Activated naive CD4-positive, alpha-beta T cell treated with anti-CD3 and anti-CD28 coated beads, Interleukin-2, amount 10 ng/mL, durations not matched to agents 7 days and 5 days (primary cell): ENCODE measurements at regions of chr7 and their contacts with region 1.

Region 1: GRCh38 chr7:1193593-1194424 is 33.8 kb upstream of the ZFAND2A start:
- DNase-seq: peak; percentile 68
- H3K4me3 Mint-ChIP-seq: no peak overlapping the region
- H3K27ac Mint-ChIP-seq: no peak overlapping the region
- H3K4me1 Mint-ChIP-seq: peaks cover 29% of the 10 kb centered on the region
- H3K27me3 Mint-ChIP-seq: peaks cover 29% of the 10 kb centered on the region

Region 2: GRCh38 chr7:1169409-1170368 is 24.1 kb before region 1 on chr7:
- CTCF ChIA-PET with region 1: interaction called, 33 read pairs
- DNase-seq: peak; percentile 97
- H3K4me3 Mint-ChIP-seq: peak overlapping the region; percentile 82
- H3K27ac Mint-ChIP-seq: peak overlapping the region; percentile 94
- H3K4me1 Mint-ChIP-seq: peaks cover 21% of the 10 kb centered on the region
- H3K27me3 Mint-ChIP-seq: peaks cover under 1% of the 10 kb centered on the region

Region 3: DNA sequence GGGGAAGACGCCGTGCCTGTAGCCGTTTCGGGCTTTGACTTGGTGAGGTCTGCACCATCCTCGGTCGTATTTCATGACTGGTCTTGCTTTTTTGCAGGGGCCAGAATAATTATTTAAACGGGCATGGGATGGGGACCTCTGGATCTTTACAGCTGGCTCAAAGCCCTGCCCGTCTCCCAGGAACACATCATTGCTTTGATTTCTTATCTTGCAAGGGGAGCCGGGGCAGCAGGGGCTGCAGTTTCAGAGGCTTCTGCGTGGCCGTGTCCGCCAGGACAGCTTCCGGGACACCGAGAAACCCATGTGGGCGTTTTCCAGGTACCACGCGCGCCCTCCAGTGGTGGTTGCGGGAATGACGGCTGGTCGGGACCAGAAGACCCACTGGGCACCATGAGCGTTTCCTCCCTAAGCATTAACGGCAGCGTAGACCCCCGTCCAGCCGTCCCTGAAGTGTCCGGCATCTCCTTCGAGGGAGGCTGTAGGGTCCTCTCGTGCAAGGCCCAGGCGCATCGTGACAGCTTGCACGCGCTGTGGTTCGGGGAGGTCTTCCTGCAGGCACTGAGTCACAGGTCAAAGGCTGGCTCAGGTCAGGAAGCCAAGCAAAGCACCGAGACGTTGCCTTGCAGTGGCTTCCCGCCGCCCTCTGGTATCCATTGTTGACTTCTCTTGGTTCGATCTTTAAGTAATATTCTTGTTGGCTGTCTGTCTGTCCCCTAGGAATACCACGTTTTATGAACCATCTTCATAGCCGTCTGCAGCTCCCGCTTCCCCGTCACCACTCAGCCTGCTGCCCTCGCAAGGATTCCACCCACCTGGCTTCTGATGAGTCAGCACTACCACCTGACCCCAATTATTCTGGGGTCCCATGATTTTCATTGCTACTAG is 17.6 kb before region 1 on chr7:
- CTCF ChIA-PET with region 1: interaction called, 40 read pairs
- DNase-seq: peak; percentile 88
- H3K4me3 Mint-ChIP-seq: peak overlapping the region; percentile 31
- H3K27ac Mint-ChIP-seq: peak overlapping the region; percentile 80
- H3K4me1 Mint-ChIP-seq: peaks cover 17% of the 10 kb centered on the region
- H3K27me3 Mint-ChIP-seq: peaks cover 26% of the 10 kb centered on the region

Region 4: GRCh38 chr7:1181640-1182039 is 12.2 kb before region 1 on chr7:
- CTCF ChIA-PET with region 1: interaction called, 40 read pairs
- DNase-seq: no peak
- H3K4me3 Mint-ChIP-seq: no peak overlapping the region
- H3K27ac Mint-ChIP-seq: no peak overlapping the region
- H3K4me1 Mint-ChIP-seq: peaks cover 10% of the 10 kb centered on the region
- H3K27me3 Mint-ChIP-seq: peaks cover 46% of the 10 kb centered on the region

Region 5: DNA sequence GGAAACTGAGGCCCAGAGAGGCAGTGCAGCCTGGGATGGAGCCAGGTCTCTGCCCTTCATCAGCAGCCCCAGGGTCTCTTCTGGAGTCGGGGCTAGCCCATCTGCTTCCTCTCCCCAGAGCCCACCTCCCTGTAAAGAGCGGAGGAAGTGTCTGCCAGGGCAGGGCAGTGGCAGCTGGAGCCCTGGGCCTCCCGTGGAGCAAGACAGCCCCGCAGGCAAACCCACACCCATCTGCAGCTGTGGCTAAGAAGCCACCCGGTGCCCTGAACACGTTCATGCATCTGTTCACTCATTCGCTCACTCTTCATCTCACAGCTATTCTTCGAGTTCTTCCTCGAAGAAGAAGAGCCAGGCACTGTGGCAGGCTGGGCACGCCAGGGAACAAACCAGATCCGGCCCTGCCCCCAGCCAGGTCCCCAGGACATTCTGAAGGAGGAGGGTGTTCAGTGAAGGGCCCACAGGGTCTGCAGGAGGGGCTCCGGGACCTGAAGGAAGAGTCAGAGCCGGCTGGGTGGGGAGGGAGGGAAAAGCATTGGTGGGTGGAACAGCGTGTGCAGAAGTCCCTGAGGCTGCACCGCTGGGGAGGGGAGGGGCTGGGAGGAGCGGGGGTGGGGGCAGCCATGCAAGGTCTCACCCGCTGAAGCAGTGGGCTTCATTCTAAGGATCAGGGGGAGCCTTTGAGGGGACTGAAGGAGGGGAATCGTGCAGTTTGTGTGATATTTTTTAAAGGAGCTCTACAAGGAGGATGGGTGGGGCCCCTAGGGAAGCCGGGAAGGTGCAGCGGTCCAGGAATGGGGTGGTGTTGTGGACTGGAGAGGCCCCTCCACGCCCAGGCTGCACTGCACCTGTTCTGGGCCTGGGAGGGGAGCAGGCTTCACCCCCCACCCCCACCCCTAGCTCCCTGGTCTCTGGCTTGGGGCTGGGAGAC is 138.0 kb after region 1 on chr7:
- CTCF ChIA-PET with region 1: no interaction called
- DNase-seq: no peak
- H3K4me3 Mint-ChIP-seq: no peak overlapping the region
- H3K27ac Mint-ChIP-seq: no peak overlapping the region
- H3K4me1 Mint-ChIP-seq: no peaks in the 10 kb centered on the region
- H3K27me3 Mint-ChIP-seq: peaks cover 17% of the 10 kb centered on the region

Region 6: GRCh38 chr7:1432411-1433082 is 238.7 kb after region 1 on chr7:
- CTCF ChIA-PET with region 1: interaction called, 38 read pairs
- DNase-seq: peak; percentile 85
- H3K4me3 Mint-ChIP-seq: no peak overlapping the region
- H3K27ac Mint-ChIP-seq: no peak overlapping the region
- H3K4me1 Mint-ChIP-seq: peaks cover 2% of the 10 kb centered on the region
- H3K27me3 Mint-ChIP-seq: peaks cover 13% of the 10 kb centered on the region

Region 7: GRCh38 chr7:1473864-1474512 is 280.2 kb after region 1 on chr7:
- CTCF ChIA-PET with region 1: interaction called, 24 read pairs
- DNase-seq: peak; percentile 93
- H3K4me3 Mint-ChIP-seq: no peak overlapping the region
- H3K27ac Mint-ChIP-seq: no peak overlapping the region
- H3K4me1 Mint-ChIP-seq: peaks cover 14% of the 10 kb centered on the region
- H3K27me3 Mint-ChIP-seq: no peaks in the 10 kb centered on the region